Naive thymus-derived CD4-positive, alpha-beta T cell (primary cell): ENCODE measurements at regions of chr21 and their contacts with region 1.

Region 1: GRCh38 chr21:15514073-15514946 is 215.5 kb upstream of the USP25 start:
- DNase-seq: peak in 8 of 9 donors; percentile 34 to 87 (median 82)
- ATAC-seq: peak; percentile 99
- H3K4me3 ChIP-seq: peak overlapping the region; percentile 23
- H3K4me3 Mint-ChIP-seq: peak overlapping the region; percentile 59 to 76 (median 69)
- H3K27ac ChIP-seq: peak overlapping the region; percentile 46
- H3K27ac Mint-ChIP-seq: peak overlapping the region; percentile 75 to 94 (median 87)
- H3K4me1 ChIP-seq: peaks cover 12 to 32% of the 10 kb centered on the region in 2 donors
- H3K4me1 Mint-ChIP-seq: peaks cover 16 to 54% (median 31%) of the 10 kb centered on the region in 7 donors
- H3K27me3 ChIP-seq: no peaks in the 10 kb centered on the region
- H3K27me3 Mint-ChIP-seq: no peaks in the 10 kb centered on the region

Region 2: DNA sequence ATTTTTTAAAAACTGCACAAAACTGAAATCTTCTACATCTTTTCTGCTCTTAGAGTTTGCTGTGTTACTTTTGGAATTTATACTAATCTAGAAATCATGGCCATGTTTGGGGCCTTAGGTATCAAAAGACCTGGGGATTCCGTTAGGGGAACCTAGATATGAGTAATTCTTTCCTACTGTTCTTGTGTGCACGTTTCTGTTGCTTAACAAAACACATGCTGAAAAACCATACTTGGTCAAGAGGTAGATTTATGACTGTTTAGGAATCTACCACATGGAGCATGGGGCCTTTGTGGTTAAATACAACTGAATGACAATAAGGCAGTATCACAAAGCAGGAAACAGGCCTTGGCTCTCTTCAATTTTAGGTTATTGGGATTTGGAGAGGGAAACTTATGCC is 76.4 kb before region 1 on chr21:
- CTCF ChIA-PET with region 1: no interaction called
- POLR2A ChIA-PET with region 1: no interaction called
- intact Hi-C with region 1: no loop called
- DNase-seq: no peak
- ATAC-seq: no peak
- H3K4me3 ChIP-seq: no peak overlapping the region
- H3K4me3 Mint-ChIP-seq: no peak overlapping the region
- H3K27ac ChIP-seq: no peak overlapping the region
- H3K27ac Mint-ChIP-seq: no peak overlapping the region
- H3K4me1 ChIP-seq: no peaks in the 10 kb centered on the region
- H3K4me1 Mint-ChIP-seq: peaks cover 0 to 6% (median 5%) of the 10 kb centered on the region in 7 donors
- H3K27me3 ChIP-seq: no peaks in the 10 kb centered on the region
- H3K27me3 Mint-ChIP-seq: no peaks in the 10 kb centered on the region

Region 3: GRCh38 chr21:15468368-15468767 is 45.9 kb before region 1 on chr21:
- CTCF ChIA-PET with region 1: no interaction called
- POLR2A ChIA-PET with region 1: no interaction called
- intact Hi-C with region 1: no loop called
- DNase-seq: no peak
- ATAC-seq: no peak
- H3K4me3 ChIP-seq: no peak overlapping the region
- H3K4me3 Mint-ChIP-seq: no peak overlapping the region
- H3K27ac ChIP-seq: no peak overlapping the region
- H3K27ac Mint-ChIP-seq: no peak overlapping the region
- H3K4me1 ChIP-seq: no peaks in the 10 kb centered on the region
- H3K4me1 Mint-ChIP-seq: no peaks in the 10 kb centered on the region
- H3K27me3 ChIP-seq: no peaks in the 10 kb centered on the region
- H3K27me3 Mint-ChIP-seq: peaks cover 0 to 7% (median 2%) of the 10 kb centered on the region in 5 donors

Region 4: DNA sequence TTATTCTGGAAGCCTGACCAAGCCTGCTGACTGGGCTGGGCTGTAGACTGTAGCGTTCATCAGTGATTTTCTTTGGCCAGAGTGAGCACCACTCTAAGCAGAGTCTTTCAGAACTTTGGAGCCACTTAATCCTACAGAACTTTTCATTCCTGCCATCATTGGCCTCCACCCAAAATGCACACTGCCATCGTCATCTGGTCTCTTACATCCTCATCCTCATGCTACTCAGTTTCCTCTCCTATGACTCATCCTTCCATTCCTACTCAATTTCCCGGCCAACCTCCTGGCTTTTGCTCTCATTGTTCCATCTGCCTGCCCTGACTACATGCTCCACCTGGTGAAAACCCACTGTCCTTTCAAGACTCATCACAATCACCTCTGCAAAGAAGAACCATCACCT is 18.3 kb before region 1 on chr21:
- CTCF ChIA-PET with region 1: interaction called, 3 read pairs
- POLR2A ChIA-PET with region 1: interaction called, 6 read pairs
- intact Hi-C with region 1: loop called in 1 of 2 experiments (anchors 1 kb)
- DNase-seq: no peak
- ATAC-seq: no peak
- H3K4me3 ChIP-seq: no peak overlapping the region
- H3K4me3 Mint-ChIP-seq: no peak overlapping the region
- H3K27ac ChIP-seq: no peak overlapping the region
- H3K27ac Mint-ChIP-seq: no peak overlapping the region
- H3K4me1 ChIP-seq: no peaks in the 10 kb centered on the region
- H3K4me1 Mint-ChIP-seq: peaks cover 0 to 8% (median 2%) of the 10 kb centered on the region in 7 donors
- H3K27me3 ChIP-seq: no peaks in the 10 kb centered on the region
- H3K27me3 Mint-ChIP-seq: peaks cover 0 to 3% (median 0%) of the 10 kb centered on the region in 5 donors